AG04450 (cell line): ENCODE measurements at regions of chr1 and their contacts with region 1.

Region 1: DNA sequence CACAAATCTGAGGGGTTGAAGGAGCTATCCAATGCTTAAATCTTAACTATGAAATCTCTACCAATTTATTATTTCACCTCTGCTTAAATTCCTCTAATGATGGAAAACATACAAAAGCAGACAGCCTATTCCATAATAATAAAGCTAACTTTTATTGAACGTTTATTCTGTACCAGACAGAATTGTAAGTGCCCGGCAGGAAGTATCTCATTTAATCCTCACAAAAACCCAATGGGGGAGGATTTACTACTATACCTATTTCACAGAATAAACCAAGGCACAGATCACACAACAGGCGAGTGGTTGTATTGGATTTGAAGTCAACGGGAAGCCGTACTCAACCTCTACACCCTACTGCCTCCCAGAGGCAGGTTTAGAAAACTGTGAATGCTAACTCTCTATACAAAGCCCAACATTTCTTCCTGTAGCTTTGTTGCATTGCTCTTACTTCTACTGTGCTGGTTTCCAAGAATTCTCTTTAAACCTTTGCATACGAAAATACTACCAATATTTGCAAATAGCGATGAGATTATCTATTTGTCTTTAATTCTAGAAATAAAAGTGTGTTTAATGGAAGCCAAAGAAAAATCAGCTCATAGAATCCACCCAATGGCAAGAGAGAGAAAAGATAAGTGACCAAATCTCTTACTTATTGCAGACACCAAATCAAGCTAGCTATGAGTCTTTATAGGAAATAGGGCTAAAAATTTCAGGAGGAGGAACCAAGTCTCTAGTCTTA is 33.5 kb upstream of the C1orf53 start:
- DNase-seq: peak; percentile 33
- H3K4me3 ChIP-seq: no peak overlapping the region
- H3K27ac ChIP-seq: no peak overlapping the region
- H3K27me3 ChIP-seq: no peaks in the 10 kb centered on the region
- CTCF ChIP-seq: peak; percentile 76

Region 2: DNA sequence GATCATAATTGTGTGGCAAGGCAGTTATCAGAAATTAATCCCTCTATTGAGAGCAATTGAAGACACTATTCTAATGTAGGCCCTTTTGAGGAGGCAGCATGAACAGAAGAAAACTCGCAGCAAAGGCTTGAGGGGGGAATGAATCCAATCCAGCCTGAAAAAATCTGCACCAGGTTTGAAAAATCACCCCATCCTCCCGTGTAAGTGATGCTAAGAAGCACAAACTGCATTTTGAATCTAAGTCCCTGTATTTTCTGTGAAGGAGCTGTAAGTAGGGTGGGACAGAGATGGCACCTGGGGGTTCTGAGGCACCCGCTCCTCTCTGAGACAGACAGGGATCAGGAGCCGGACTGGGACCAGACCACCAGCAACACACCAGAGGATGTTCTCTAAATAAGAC is 600.9 kb before region 1 on chr1 and contains the start of gene CRB1:
- CTCF ChIA-PET with region 1: no interaction called
- POLR2A ChIA-PET with region 1: no interaction called
- DNase-seq: no peak
- H3K4me3 ChIP-seq: no peak within 1 kb of the TSS
- H3K27ac ChIP-seq: no peak within 1 kb of the TSS
- H3K27me3 ChIP-seq: no peaks in the 10 kb centered on the region
- CTCF ChIP-seq: no peak
- polyA plus RNA-seq, gene CRB1: not detected in 2 replicates

Region 3: GRCh38 chr1:197441990-197442389 is 426.9 kb before region 1 on chr1:
- CTCF ChIA-PET with region 1: no interaction called
- POLR2A ChIA-PET with region 1: no interaction called
- DNase-seq: peak; percentile 16
- H3K4me3 ChIP-seq: no peak overlapping the region
- H3K27ac ChIP-seq: no peak overlapping the region
- H3K27me3 ChIP-seq: no peaks in the 10 kb centered on the region
- CTCF ChIP-seq: no peak

Region 4: DNA sequence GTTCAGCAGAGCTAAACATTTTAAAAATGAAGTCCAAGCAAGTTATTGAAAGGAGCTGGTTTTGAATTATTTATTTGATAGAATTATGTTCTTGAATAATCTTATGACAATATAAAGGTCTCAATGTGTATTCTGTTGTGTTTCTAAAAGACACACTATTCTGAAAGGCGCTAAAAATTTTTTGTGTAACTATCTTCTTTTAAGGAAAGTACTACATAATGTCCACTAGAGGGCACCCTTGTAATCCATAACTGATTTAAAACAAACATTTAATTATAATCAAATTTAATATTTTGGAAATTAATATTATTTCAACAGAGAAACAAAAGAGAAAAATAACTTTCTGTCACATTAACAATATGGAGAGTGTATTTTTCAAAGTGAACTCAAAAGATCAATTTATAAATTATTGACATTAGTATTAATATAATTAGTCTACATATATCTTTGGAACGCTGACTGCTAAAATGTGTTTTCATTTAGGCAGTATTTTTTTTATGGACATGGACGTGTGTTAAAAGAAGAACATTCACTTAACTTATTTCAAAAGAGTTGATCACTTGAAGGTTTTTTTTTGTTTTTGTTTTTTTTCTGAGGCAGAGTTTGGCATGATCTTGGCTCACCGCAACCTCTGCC is 342.1 kb before region 1 on chr1:
- CTCF ChIA-PET with region 1: interaction called, 15 read pairs
- POLR2A ChIA-PET with region 1: no interaction called
- DNase-seq: peak; percentile 1
- H3K4me3 ChIP-seq: no peak overlapping the region
- H3K27ac ChIP-seq: no peak overlapping the region
- H3K27me3 ChIP-seq: no peaks in the 10 kb centered on the region
- CTCF ChIP-seq: peak; percentile 55

Region 5: GRCh38 chr1:197620714-197621163 is 248.2 kb before region 1 on chr1:
- CTCF ChIA-PET with region 1: interaction called, 139 read pairs
- POLR2A ChIA-PET with region 1: no interaction called
- DNase-seq: no peak
- H3K4me3 ChIP-seq: no peak overlapping the region
- H3K27ac ChIP-seq: no peak overlapping the region
- H3K27me3 ChIP-seq: no peaks in the 10 kb centered on the region
- CTCF ChIP-seq: no peak

Region 6: GRCh38 chr1:197884173-197884572 is 15.3 kb after region 1 on chr1:
- CTCF ChIA-PET with region 1: interaction called, 12 read pairs
- POLR2A ChIA-PET with region 1: no interaction called
- DNase-seq: no peak
- H3K4me3 ChIP-seq: no peak overlapping the region
- H3K27ac ChIP-seq: no peak overlapping the region
- H3K27me3 ChIP-seq: no peaks in the 10 kb centered on the region
- CTCF ChIP-seq: no peak

Region 7: GRCh38 chr1:197924516-197925123 is 55.7 kb after region 1 on chr1:
- CTCF ChIA-PET with region 1: interaction called, 11 read pairs
- POLR2A ChIA-PET with region 1: no interaction called
- DNase-seq: peak; percentile 16
- H3K4me3 ChIP-seq: no peak overlapping the region
- H3K27ac ChIP-seq: no peak overlapping the region
- H3K27me3 ChIP-seq: peaks cover 57% of the 10 kb centered on the region
- CTCF ChIP-seq: peak; percentile 82